PC-3 (cell line): ENCODE measurements at regions of chr1 and their contacts with region 1.

Region 1: GRCh38 chr1:190663962-190664361 is 186.3 kb upstream of the BRINP3 start:
- DNase-seq: no peak
- ATAC-seq: no peak
- H3K4me3 ChIP-seq: no peak overlapping the region
- H3K27ac ChIP-seq: no peak overlapping the region
- H3K4me1 ChIP-seq: no peaks in the 10 kb centered on the region
- H3K27me3 ChIP-seq: peaks cover 13% of the 10 kb centered on the region; the same call in 1 of the 2 replicates
- CTCF ChIP-seq: no peak

Region 2: DNA sequence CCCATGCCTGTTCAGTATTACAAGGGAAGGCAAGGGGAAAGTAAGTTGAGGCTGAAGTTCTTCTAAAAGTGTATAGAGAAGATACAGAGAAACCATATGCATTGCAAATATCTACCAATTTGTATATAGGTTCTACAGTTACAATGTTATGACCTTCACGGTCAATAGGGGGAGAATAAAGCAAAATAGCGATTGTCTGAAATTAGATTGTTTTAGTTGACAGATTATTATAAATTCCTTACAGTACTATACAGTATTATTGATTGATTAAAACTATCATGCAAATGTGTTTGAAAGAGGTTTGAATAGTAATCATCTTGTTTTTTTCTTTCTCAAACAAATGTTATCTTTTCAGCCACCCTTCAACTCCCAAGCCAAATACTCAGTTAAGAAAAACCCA is 172.6 kb before region 1 on chr1:
- CTCF ChIA-PET with region 1: no interaction called
- POLR2A ChIA-PET with region 1: no interaction called
- intact Hi-C with region 1: no loop called
- DNase-seq: no peak
- ATAC-seq: no peak
- H3K4me3 ChIP-seq: no peak overlapping the region
- H3K27ac ChIP-seq: no peak overlapping the region
- H3K4me1 ChIP-seq: no peaks in the 10 kb centered on the region
- H3K27me3 ChIP-seq: 0 out of 2 replicates have a peak, but pooled peaks cover 10% of the 10 kb centered on the region
- CTCF ChIP-seq: peak; percentile 50

Region 3: GRCh38 chr1:190738321-190738720 is 74.4 kb after region 1 on chr1:
- CTCF ChIA-PET with region 1: no interaction called
- POLR2A ChIA-PET with region 1: no interaction called
- intact Hi-C with region 1: no loop called
- DNase-seq: peak; percentile 25
- ATAC-seq: no peak
- H3K4me3 ChIP-seq: no peak overlapping the region
- H3K27ac ChIP-seq: no peak overlapping the region
- H3K4me1 ChIP-seq: no peaks in the 10 kb centered on the region
- H3K27me3 ChIP-seq: peaks cover 22% of the 10 kb centered on the region
- CTCF ChIP-seq: no peak

Region 4: GRCh38 chr1:190759807-190760206 is 95.8 kb after region 1 on chr1:
- CTCF ChIA-PET with region 1: no interaction called
- POLR2A ChIA-PET with region 1: no interaction called
- intact Hi-C with region 1: no loop called
- DNase-seq: no peak
- ATAC-seq: no peak
- H3K4me3 ChIP-seq: no peak overlapping the region
- H3K27ac ChIP-seq: no peak overlapping the region
- H3K4me1 ChIP-seq: no peaks in the 10 kb centered on the region
- H3K27me3 ChIP-seq: peaks cover 13% of the 10 kb centered on the region; the same call in 1 of the 2 replicates
- CTCF ChIP-seq: no peak

Region 5: GRCh38 chr1:190849346-190849745 is 185.4 kb after region 1 on chr1:
- CTCF ChIA-PET with region 1: no interaction called
- POLR2A ChIA-PET with region 1: no interaction called
- intact Hi-C with region 1: no loop called
- DNase-seq: no peak
- ATAC-seq: no peak; the same call in 1 of the 2 replicates
- H3K4me3 ChIP-seq: no peak overlapping the region
- H3K27ac ChIP-seq: no peak overlapping the region
- H3K4me1 ChIP-seq: no peaks in the 10 kb centered on the region
- H3K27me3 ChIP-seq: peaks cover 35% of the 10 kb centered on the region
- CTCF ChIP-seq: no peak

Region 6: DNA sequence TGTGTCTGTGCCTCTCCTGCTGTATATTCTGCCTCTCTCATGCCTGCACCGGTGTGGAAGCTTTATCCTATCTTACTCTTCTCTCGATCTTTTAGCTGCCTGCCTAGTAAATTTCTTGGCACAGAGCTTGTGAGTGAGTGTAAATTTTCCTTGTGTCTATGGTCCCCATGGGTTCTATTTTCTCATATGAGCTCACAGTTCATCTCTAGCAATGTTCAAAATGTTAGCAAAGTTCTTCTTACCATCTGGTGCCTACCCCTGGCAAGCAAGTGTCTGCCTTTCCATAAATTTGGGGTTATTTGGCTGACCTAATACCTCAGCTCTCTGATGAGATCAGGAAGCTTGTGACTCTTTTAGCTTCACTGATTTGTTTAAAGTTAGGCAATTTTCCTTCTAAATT is 385.8 kb after region 1 on chr1:
- CTCF ChIA-PET with region 1: no interaction called
- POLR2A ChIA-PET with region 1: no interaction called
- intact Hi-C with region 1: loop called (anchors 5 kb)
- DNase-seq: no peak
- ATAC-seq: no peak
- H3K4me3 ChIP-seq: no peak overlapping the region
- H3K27ac ChIP-seq: no peak overlapping the region
- H3K4me1 ChIP-seq: no peaks in the 10 kb centered on the region
- H3K27me3 ChIP-seq: no peaks in the 10 kb centered on the region
- CTCF ChIP-seq: no peak